ENCODE measurements at regions of chr3 and their contacts with region 1.

Region 1: GRCh38 chr3:118884748-118885206 is 149.9 kb downstream of the IGSF11 start:
- DNase-seq: peak; percentile 71
- H3K4me3 Mint-ChIP-seq: no peak overlapping the region
- H3K27ac Mint-ChIP-seq: no peak overlapping the region
- H3K4me1 Mint-ChIP-seq: no peaks in the 10 kb centered on the region
- H3K27me3 Mint-ChIP-seq: peaks cover 61% of the 10 kb centered on the region
- CTCF ChIP-seq: peak; percentile 92

Region 2: DNA sequence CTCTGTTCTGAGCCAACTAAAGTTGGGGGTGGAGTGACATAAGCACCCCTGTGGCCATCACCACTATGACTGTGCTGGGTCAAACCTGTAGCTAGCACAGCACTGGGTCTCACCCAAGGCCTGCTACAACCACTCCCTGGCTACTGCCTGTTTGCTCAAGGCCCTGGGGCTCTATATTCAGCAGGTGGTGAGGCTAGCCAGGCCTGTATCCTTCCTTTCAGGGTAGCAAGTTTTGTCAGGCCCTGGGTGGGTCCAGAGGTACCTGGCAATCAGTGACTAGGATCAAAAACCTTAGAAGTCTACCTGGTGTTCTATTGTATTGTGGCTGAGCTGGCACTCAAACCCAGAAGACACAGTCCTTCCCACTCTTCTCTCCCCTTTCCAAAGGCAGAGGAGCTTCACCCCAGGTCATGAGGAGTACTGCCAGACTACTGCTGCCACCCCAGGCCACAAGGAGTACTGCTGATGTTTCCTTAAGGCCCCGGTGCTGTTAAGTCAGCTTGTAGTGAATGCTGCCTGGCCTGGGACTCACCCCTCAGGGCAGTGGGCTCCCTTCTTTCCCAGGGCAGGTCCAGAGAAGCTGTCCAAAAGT is 20.9 kb before region 1 on chr3:
- CTCF ChIA-PET with region 1: interaction called, 69 read pairs
- POLR2A ChIA-PET with region 1: no interaction called
- intact Hi-C with region 1: no loop called
- DNase-seq: peak; percentile 42
- H3K4me3 Mint-ChIP-seq: no peak overlapping the region
- H3K27ac Mint-ChIP-seq: no peak overlapping the region
- H3K4me1 Mint-ChIP-seq: no peaks in the 10 kb centered on the region
- H3K27me3 Mint-ChIP-seq: no peaks in the 10 kb centered on the region
- CTCF ChIP-seq: peak; percentile 25

Region 3: GRCh38 chr3:118932822-118933558 is 48.2 kb after region 1 on chr3:
- CTCF ChIA-PET with region 1: interaction called, 15 read pairs
- POLR2A ChIA-PET with region 1: no interaction called
- intact Hi-C with region 1: no loop called
- DNase-seq: peak; percentile 45
- H3K4me3 Mint-ChIP-seq: no peak overlapping the region
- H3K27ac Mint-ChIP-seq: no peak overlapping the region
- H3K4me1 Mint-ChIP-seq: peaks cover 3% of the 10 kb centered on the region
- H3K27me3 Mint-ChIP-seq: no peaks in the 10 kb centered on the region
- CTCF ChIP-seq: no peak

Region 4: DNA sequence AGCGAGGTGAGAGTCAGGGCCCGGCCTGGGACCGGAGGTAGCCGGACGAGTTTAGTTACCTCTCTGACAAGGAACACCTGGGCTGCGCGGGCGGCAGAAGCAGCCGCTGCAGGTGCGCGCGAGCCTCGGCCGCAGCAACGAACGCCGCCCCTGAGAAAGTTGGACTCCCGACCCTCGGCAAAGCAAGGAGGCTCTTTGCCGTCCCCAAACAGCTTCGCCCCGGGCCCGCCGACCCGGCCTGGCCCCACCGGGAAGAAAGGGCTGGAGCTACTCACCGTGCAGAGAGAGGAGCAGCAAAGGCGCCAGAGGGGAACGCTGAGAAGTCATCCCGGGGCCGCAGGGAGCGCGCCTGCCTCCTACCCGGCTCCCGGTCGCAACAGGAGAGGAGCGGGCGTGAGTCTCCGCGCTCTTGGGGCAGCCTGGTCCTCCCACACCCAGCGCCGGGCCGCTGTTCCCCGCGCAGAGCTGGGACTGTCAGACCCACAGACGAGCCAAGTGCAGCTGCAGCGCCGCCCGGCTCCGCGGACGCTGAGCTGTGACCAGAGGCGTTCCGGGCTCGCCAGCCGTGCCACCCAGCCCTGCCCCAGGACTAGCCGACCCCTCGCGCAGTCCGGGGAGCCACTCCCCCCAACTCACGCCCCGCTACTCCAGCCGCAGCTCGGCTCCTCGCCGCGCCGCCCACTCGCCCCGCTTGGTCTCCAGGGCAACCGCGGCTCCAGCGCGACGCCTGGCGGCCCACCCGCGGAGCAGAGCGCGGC is 149.7 kb after region 1 on chr3 and contains the start of gene IGSF11:
- CTCF ChIA-PET with region 1: interaction called, 325 read pairs
- POLR2A ChIA-PET with region 1: interaction called, 3 read pairs
- intact Hi-C with region 1: loop called (anchors 1 kb)
- DNase-seq: peak; percentile 32
- H3K4me3 Mint-ChIP-seq: peak within 1 kb of the TSS; percentile 64
- H3K27ac Mint-ChIP-seq: no peak within 1 kb of the TSS
- H3K4me1 Mint-ChIP-seq: no peaks in the 10 kb centered on the region
- H3K27me3 Mint-ChIP-seq: peaks cover 82% of the 10 kb centered on the region
- CTCF ChIP-seq: peak; percentile 45
- total RNA-seq, gene IGSF11: not detected in 2 replicates

Region 5: DNA sequence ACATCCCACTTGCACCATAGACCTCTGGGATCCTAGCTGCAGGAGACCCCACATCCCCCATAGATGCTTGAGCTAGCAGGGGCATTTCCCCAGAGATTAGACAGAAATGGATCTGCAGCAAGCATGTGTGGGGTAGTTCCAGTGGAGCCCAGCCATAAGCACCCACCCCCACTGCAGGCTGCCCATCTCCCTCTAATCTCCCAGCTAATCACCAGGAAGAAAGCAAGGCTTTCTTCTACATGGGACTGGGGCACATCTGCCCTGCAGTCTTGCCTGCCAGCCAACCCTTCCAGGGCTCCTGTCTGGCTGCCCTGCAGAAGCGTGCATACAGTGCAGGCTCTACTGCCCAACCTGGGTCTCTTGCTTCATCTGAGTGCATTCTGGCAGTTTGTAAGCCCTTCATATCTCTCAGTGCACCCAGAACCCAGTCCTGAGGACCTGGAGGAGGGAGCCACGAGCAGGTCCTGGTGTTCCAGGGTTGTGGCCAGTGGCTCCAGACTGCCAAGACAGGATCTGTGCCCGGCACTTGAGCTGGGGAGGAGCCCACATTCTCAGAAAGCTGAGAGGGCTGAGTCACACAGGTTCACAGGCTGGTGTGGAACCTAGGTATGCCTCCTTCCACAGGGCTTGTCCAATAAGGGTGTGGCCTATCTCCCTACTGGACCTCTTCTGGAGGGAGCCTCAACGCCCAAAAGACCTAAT is 199.7 kb after region 1 on chr3:
- CTCF ChIA-PET with region 1: interaction called, 564 read pairs
- POLR2A ChIA-PET with region 1: interaction called, 3 read pairs
- intact Hi-C with region 1: no loop called
- DNase-seq: peak; percentile 38
- H3K4me3 Mint-ChIP-seq: no peak overlapping the region
- H3K27ac Mint-ChIP-seq: no peak overlapping the region
- H3K4me1 Mint-ChIP-seq: peaks cover 6% of the 10 kb centered on the region
- H3K27me3 Mint-ChIP-seq: no peaks in the 10 kb centered on the region
- CTCF ChIP-seq: no peak

Region 6: GRCh38 chr3:119125742-119126503 is 241.1 kb after region 1 on chr3:
- CTCF ChIA-PET with region 1: interaction called, 17 read pairs
- POLR2A ChIA-PET with region 1: no interaction called
- intact Hi-C with region 1: no loop called
- DNase-seq: no peak
- H3K4me3 Mint-ChIP-seq: no peak overlapping the region
- H3K27ac Mint-ChIP-seq: no peak overlapping the region
- H3K4me1 Mint-ChIP-seq: no peaks in the 10 kb centered on the region
- H3K27me3 Mint-ChIP-seq: no peaks in the 10 kb centered on the region
- CTCF ChIP-seq: no peak

Region 7: GRCh38 chr3:120182724-120183524 is 1298.1 kb after region 1 on chr3:
- CTCF ChIA-PET with region 1: no interaction called
- POLR2A ChIA-PET with region 1: no interaction called
- intact Hi-C with region 1: loop called (anchors 5 kb)
- DNase-seq: peak; percentile 80
- H3K4me3 Mint-ChIP-seq: no peak overlapping the region
- H3K27ac Mint-ChIP-seq: peak overlapping the region; percentile 83
- H3K4me1 Mint-ChIP-seq: peaks cover 27% of the 10 kb centered on the region
- H3K27me3 Mint-ChIP-seq: no peaks in the 10 kb centered on the region
- CTCF ChIP-seq: peak; percentile 42

Measured in MCF 10A (cell line).